B cell (primary cell): ENCODE measurements at regions of chr20 and their contacts with region 1.

Region 1: DNA sequence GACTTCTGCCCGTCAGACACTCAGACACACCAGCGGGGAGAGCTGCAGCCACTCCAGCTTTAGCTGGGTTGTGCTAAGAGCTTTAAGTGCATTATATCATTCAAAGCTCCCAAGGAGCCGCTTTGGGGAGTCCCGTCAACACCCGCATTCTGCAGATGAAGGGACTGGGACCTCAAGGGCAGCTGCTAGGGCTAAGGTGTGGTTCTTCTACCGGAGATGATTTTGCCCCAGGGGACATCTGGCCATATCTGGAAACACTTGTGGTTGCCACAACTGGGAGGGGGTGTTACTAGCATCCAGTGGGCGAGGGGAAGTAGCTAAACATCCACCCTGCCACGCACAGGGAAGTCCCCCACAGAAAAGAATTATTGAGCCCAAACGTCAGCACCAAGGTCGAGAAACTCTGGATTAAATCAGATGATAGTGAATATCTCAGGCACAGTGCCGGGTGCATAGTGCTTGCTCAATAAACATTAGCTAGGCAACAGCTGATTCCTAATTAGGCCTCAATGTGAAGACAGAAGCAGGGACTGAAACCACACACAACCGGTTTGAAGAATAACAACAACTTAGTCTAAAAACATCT is 29.6 kb downstream of the PMEPA1 start:
- DNase-seq: peak; percentile 95
- ATAC-seq: peak; percentile 71
- H3K4me3 ChIP-seq: peak overlapping the region; percentile 3 to 55 (median 25)
- H3K4me3 Mint-ChIP-seq: peak overlapping the region; percentile 86
- H3K27ac ChIP-seq: peak overlapping the region; percentile 88 to 96
- H3K27ac Mint-ChIP-seq: peak overlapping the region; percentile 96
- H3K4me1 ChIP-seq: peaks cover 94 to 100% of the 10 kb centered on the region in 2 donors
- H3K4me1 Mint-ChIP-seq: peaks cover 99% of the 10 kb centered on the region
- H3K27me3 ChIP-seq: no peaks in the 10 kb centered on the region
- H3K27me3 Mint-ChIP-seq: no peaks in the 10 kb centered on the region
- CTCF ChIP-seq: no peak

Region 2: GRCh38 chr20:57190363-57191264 is 489.6 kb before region 1 on chr20:
- CTCF ChIA-PET with region 1: no interaction called
- POLR2A ChIA-PET with region 1: no interaction called
- intact Hi-C with region 1: no loop called
- DNase-seq: no peak
- ATAC-seq: no peak
- H3K4me3 ChIP-seq: no peak overlapping the region
- H3K4me3 Mint-ChIP-seq: no peak overlapping the region
- H3K27ac ChIP-seq: no peak overlapping the region
- H3K27ac Mint-ChIP-seq: no peak overlapping the region
- H3K4me1 ChIP-seq: no peaks in the 10 kb centered on the region
- H3K4me1 Mint-ChIP-seq: no peaks in the 10 kb centered on the region
- H3K27me3 ChIP-seq: no peaks in the 10 kb centered on the region
- H3K27me3 Mint-ChIP-seq: peaks cover 3% of the 10 kb centered on the region
- CTCF ChIP-seq: no peak

Region 3: GRCh38 chr20:57391074-57391554 is 289.1 kb before region 1 on chr20 and contains the start of gene RBM38:
- CTCF ChIA-PET with region 1: no interaction called
- POLR2A ChIA-PET with region 1: no interaction called
- intact Hi-C with region 1: loop called (anchors 2 kb)
- DNase-seq: peak; percentile 91
- ATAC-seq: peak; percentile 66
- H3K4me3 ChIP-seq: peak within 1 kb of the TSS; percentile 82 to 99 (median 91)
- H3K4me3 Mint-ChIP-seq: peak within 1 kb of the TSS; percentile 98
- H3K27ac ChIP-seq: peak within 1 kb of the TSS; percentile 96 to 98
- H3K27ac Mint-ChIP-seq: peak within 1 kb of the TSS; percentile 98
- H3K4me1 ChIP-seq: peaks cover 54 to 66% of the 10 kb centered on the region in 2 donors
- H3K4me1 Mint-ChIP-seq: peaks cover 51% of the 10 kb centered on the region
- H3K27me3 ChIP-seq: no peaks in the 10 kb centered on the region
- H3K27me3 Mint-ChIP-seq: no peaks in the 10 kb centered on the region
- CTCF ChIP-seq: no peak
- total RNA-seq, gene RBM38: 224 and 225 TPM in 2 replicates

Region 4: GRCh38 chr20:57628047-57628961 is 51.9 kb before region 1 on chr20:
- CTCF ChIA-PET with region 1: interaction called, 70 read pairs
- POLR2A ChIA-PET with region 1: interaction called, 15 read pairs
- intact Hi-C with region 1: loop called (anchors 2 kb)
- DNase-seq: peak; percentile 82
- ATAC-seq: peak; percentile 78
- H3K4me3 ChIP-seq: peak overlapping the region; percentile 18 to 59 (median 39)
- H3K4me3 Mint-ChIP-seq: peak overlapping the region; percentile 84
- H3K27ac ChIP-seq: peak overlapping the region; percentile 78 to 81
- H3K27ac Mint-ChIP-seq: peak overlapping the region; percentile 93
- H3K4me1 ChIP-seq: peaks cover 31 to 38% of the 10 kb centered on the region in 2 donors
- H3K4me1 Mint-ChIP-seq: peaks cover 41% of the 10 kb centered on the region
- H3K27me3 ChIP-seq: peaks cover 0 to 6% (median 2%) of the 10 kb centered on the region in 4 experiments
- H3K27me3 Mint-ChIP-seq: peaks cover 12% of the 10 kb centered on the region
- CTCF ChIP-seq: no peak

Region 5: GRCh38 chr20:57693002-57693640 is 12.9 kb after region 1 on chr20:
- CTCF ChIA-PET with region 1: interaction called, 43 read pairs
- POLR2A ChIA-PET with region 1: interaction called, 7 read pairs
- intact Hi-C with region 1: no loop called
- DNase-seq: peak; percentile 54
- ATAC-seq: peak; percentile 28
- H3K4me3 ChIP-seq: no peak overlapping the region
- H3K4me3 Mint-ChIP-seq: peak overlapping the region; percentile 48
- H3K27ac ChIP-seq: no peak overlapping the region
- H3K27ac Mint-ChIP-seq: peak overlapping the region; percentile 46
- H3K4me1 ChIP-seq: peaks cover 85 to 98% of the 10 kb centered on the region in 2 donors
- H3K4me1 Mint-ChIP-seq: peaks cover 86% of the 10 kb centered on the region
- H3K27me3 ChIP-seq: no peaks in the 10 kb centered on the region
- H3K27me3 Mint-ChIP-seq: no peaks in the 10 kb centered on the region
- CTCF ChIP-seq: peak; percentile 48

Region 6: GRCh38 chr20:57709931-57710799 is 29.9 kb after region 1 on chr20 and contains the start of gene PMEPA1:
- CTCF ChIA-PET with region 1: interaction called, 39 read pairs
- POLR2A ChIA-PET with region 1: interaction called, 15 read pairs
- intact Hi-C with region 1: loop called (anchors 1 kb)
- DNase-seq: peak; percentile 97
- ATAC-seq: peak; percentile 86
- H3K4me3 ChIP-seq: peak within 1 kb of the TSS; percentile 59 to 96 (median 83)
- H3K4me3 Mint-ChIP-seq: peak within 1 kb of the TSS; percentile 99
- H3K27ac ChIP-seq: peak within 1 kb of the TSS; percentile 80 to 99
- H3K27ac Mint-ChIP-seq: peak within 1 kb of the TSS; percentile 92
- H3K4me1 ChIP-seq: peaks cover 49 to 55% of the 10 kb centered on the region in 2 donors
- H3K4me1 Mint-ChIP-seq: peaks cover 53% of the 10 kb centered on the region
- H3K27me3 ChIP-seq: no peaks in the 10 kb centered on the region
- H3K27me3 Mint-ChIP-seq: no peaks in the 10 kb centered on the region
- CTCF ChIP-seq: no peak
- total RNA-seq, gene PMEPA1: 37.4 and 38.7 TPM in 2 replicates

Region 7: DNA sequence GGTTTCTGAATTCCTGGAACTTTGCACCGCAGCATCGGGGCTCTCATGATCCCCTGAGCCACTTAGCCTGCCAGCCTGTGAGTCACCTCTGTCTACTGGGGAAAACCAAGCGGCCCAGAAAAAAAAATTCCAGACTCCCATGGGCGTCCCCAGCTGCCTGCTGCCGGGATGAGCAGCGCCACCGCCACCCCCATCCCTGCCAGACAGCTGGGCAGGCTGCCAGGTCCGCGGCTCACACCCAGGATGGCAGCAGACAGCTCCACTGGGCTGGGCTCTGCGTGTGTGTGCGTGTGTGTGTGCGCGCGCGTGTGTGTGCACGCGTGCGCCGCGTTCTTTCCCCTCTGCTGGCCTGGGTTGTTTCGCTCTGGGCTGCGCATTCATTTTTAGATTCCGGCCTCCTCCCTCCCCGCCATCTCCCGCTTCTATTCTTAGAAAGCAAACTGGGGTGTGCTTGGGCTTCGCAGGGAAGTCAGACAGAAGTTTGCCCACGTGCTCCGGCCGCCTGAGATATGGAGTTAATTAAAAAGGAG is 68.4 kb after region 1 on chr20:
- CTCF ChIA-PET with region 1: interaction called, 11 read pairs
- POLR2A ChIA-PET with region 1: no interaction called
- intact Hi-C with region 1: no loop called
- DNase-seq: peak; percentile 64
- ATAC-seq: peak; percentile 75
- H3K4me3 ChIP-seq: peak overlapping the region in 4 of 5 experiments; percentile 25 to 49 (median 40)
- H3K4me3 Mint-ChIP-seq: peak overlapping the region; percentile 89
- H3K27ac ChIP-seq: no peak overlapping the region
- H3K27ac Mint-ChIP-seq: no peak overlapping the region
- H3K4me1 ChIP-seq: peaks cover 13 to 19% of the 10 kb centered on the region in 2 donors
- H3K4me1 Mint-ChIP-seq: peaks cover 22% of the 10 kb centered on the region
- H3K27me3 ChIP-seq: peaks cover 0 to 40% (median 10%) of the 10 kb centered on the region in 4 experiments
- H3K27me3 Mint-ChIP-seq: peaks cover 47% of the 10 kb centered on the region
- CTCF ChIP-seq: no peak